ENCODE measurements at regions of chr10 and their contacts with region 1.

Region 1: DNA sequence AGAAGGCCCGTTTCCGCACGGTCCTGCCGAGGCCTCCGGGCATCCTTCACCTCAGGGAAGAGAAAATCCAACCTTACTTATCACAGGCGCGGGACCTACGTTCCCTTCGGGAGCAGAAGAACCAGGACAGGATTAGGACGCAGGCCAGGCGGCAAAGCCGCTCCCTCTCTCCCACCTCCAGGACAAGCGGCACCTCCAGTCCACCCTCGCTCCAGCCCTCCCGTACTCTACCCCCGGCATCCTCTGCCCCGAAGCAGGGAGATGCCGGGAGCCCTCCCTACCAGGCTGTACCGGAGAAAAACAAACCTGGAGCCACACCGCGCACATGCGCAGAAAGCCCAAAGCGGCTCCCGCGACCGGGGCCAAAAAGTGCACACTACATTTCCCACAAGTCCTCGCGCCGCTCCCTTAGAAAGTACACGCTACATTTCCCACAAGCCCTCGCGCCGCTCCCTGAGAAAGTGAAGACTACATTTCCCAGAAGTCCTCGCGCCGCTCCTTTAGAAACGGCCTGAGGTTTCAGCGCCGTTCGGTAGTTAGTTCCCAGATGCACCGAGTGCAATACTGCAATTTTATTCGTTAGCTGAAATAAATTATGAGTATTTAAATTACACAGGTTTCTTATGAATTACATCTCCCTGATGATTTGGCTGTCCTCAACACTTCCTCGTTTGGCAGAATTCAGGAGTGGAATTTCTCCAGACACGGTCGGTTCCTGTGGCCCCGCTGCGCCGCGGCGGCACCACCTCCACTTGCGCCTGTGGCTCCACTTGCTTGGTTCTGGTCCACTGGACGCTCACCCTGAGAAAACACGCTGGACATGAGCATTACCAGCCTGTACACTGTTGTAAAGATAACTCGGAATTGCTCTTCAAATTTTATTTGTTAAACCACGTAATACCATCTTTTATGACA is 85.6 kb downstream of the ZNF33B start:
- DNase-seq: peak; percentile 91 to 99 (median 94)

Region 2: GRCh38 chr10:42638055-42638820 is 85.5 kb after region 1 on chr10 and contains the start of gene ZNF33B:
- intact Hi-C with region 1: loop called (anchors 1 kb)
- DNase-seq: peak; percentile 79 to 99 (median 91)

Region 3: GRCh38 chr10:42697926-42698325 is 145.2 kb after region 1 on chr10:
- intact Hi-C with region 1: no loop called
- DNase-seq: no peak

Region 4: DNA sequence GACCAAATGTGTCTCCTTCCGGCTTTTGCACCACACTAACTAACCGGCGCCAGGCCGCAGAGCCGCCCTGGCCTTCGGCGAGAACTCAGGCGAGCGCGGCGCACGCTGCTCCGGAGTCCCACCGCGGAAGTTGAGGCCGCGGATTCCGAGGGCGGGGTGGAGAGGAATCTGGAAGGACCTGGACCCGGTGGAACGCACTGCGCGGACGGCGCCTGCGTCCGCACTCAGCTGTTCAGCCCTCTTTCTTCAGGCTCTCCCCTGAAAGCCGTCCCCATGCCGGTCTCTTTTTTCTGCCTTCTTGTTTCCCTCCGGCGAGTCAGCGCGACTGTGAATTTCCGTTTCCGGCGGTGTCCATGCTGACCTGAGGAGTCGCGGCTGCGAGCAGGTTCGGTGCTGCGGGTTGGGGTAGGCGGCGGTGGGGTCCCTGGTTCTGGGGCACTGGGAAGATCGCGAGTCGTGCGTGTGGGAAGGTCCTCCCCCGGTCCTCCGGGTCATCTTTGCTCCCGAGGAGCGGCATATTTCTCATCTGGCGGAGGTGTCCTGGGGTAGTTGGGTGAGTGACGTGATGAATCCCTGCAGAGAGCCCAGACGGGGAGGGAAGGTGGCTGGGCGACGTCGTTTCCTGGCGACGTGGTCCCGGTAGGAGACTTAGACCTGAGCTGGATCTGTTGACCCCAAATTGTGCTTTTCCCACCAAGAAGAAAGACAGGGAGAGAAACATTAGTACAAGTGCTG is 229.9 kb after region 1 on chr10 and contains the start of gene BMS1:
- intact Hi-C with region 1: loop called (anchors 10 kb)
- DNase-seq: peak; percentile 86 to 99 (median 93)

Region 5: DNA sequence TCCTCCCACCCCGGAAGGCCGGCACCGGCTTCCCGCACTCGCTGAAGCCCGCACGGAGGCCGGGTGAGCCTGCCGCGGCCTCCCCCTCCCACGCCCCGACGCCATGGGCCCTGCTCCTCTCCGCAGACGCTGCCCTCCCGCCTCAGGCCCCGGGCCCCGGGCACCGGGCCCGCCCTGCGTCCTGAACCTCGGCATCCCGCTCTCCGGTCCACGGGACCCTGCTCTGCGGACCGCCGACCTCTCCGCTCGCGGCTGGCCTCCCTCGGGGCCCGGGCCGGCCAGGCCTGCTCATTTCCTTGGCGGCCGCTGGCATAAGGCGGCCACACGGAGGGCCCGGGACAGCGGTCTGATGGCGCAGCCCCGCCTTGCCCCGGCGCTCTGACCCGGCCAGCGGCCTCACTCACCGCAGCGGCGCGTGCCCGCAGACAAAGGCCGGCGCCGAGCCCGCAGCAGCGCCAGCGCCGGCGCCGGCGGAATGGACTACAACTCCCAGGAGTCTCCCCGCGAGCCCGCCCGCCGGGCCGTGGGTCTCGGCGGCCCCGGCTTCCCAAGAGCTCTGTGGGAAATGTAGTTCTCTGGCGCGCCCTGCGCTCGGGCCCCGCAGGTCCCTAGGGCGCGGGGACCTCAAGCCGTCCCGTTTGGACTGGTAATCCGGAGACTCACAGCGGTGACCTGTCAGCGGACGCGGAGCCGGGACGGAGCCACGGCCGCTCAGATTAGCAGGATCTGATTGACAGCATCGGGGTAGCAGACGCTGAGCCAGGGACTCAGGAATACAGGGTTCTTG is 1095.8 kb after region 1 on chr10 and contains the start of gene ZNF32:
- intact Hi-C with region 1: loop called (anchors 10 kb)
- DNase-seq: peak; percentile 79 to 98 (median 86)

Measured in posterior cingulate gyrus (tissue), 11 donors.